WTC11 (cell line): ENCODE measurements at regions of chr17 and their contacts with region 1.

Region 1: GRCh38 chr17:75271233-75271954 is 363 bp upstream of the MIF4GD start:
- DNase-seq: peak; percentile 78
- ATAC-seq: peak; percentile 31
- H3K4me3 Mint-ChIP-seq: peak overlapping the region; percentile 79
- H3K27ac Mint-ChIP-seq: no peak overlapping the region
- H3K4me1 Mint-ChIP-seq: peaks cover 19% of the 10 kb centered on the region
- H3K27me3 Mint-ChIP-seq: no peaks in the 10 kb centered on the region
- CTCF ChIP-seq: peak; percentile 83

Region 2: DNA sequence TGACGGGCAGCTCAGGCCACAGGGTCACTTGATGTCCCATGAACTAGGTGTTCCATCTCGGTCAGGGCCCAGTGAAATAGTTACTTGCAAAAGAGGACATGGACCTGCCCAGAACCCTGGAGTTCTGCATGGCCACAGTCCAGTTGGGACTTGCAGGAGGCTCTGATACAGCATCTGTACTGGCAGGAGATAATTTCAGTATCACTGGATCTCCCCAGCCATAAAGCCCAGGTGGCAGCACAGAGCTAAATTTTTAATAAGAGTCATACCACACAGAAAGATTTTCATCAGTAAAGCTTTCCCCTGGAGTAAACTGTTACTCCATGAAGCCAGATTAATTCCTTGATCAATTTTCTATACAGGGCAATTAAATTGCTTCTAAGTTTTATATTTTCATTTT is 201.6 kb before region 1 on chr17:
- CTCF ChIA-PET with region 1: no interaction called
- POLR2A ChIA-PET with region 1: no interaction called
- DNase-seq: no peak
- ATAC-seq: no peak
- H3K4me3 Mint-ChIP-seq: no peak overlapping the region
- H3K27ac Mint-ChIP-seq: 0 out of 2 replicates have a peak overlapping the region, but pooled peaks have one; percentile 49
- H3K4me1 Mint-ChIP-seq: no peaks in the 10 kb centered on the region
- H3K27me3 Mint-ChIP-seq: no peaks in the 10 kb centered on the region
- CTCF ChIP-seq: no peak

Region 3: DNA sequence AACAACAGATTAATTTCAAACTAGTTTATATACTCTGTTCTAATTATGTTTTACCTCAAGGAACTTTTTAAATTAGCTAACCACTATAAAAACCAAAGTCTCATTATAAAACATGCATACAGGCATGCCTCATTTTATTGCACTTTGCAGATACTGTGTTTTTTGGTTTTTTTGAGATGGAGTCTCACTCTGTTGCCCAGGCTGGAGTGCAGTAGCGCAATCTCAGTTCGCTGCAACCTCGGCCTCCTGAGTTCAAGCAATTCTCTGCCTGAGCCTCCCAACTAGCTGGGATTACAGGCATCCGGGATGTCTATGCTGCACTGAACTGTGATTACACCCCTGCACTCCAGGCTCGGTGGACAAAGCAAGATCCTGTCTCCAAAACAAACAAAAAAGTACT is 108.3 kb before region 1 on chr17:
- CTCF ChIA-PET with region 1: no interaction called
- POLR2A ChIA-PET with region 1: no interaction called
- DNase-seq: no peak
- ATAC-seq: no peak
- H3K4me3 Mint-ChIP-seq: no peak overlapping the region
- H3K27ac Mint-ChIP-seq: no peak overlapping the region
- H3K4me1 Mint-ChIP-seq: 0 out of 2 replicates have a peak, but pooled peaks cover 2% of the 10 kb centered on the region
- H3K27me3 Mint-ChIP-seq: no peaks in the 10 kb centered on the region
- CTCF ChIP-seq: no peak

Region 4: GRCh38 chr17:75289115-75289831 is 17.9 kb after region 1 on chr17 and contains the start of gene SLC25A19:
- CTCF ChIA-PET with region 1: interaction called, 106 read pairs
- POLR2A ChIA-PET with region 1: interaction called, 24 read pairs
- DNase-seq: peak; percentile 98
- ATAC-seq: peak; percentile 98
- H3K4me3 Mint-ChIP-seq: peak within 1 kb of the TSS; percentile 94
- H3K27ac Mint-ChIP-seq: peak within 1 kb of the TSS; percentile 99
- H3K4me1 Mint-ChIP-seq: peaks cover 8% of the 10 kb centered on the region
- H3K27me3 Mint-ChIP-seq: no peaks in the 10 kb centered on the region; the same call in 1 of the 2 replicates
- CTCF ChIP-seq: no peak
- total RNA-seq, gene SLC25A19: 22.6 to 27.7 TPM (median 23.0 TPM) in 3 replicates

Region 5: DNA sequence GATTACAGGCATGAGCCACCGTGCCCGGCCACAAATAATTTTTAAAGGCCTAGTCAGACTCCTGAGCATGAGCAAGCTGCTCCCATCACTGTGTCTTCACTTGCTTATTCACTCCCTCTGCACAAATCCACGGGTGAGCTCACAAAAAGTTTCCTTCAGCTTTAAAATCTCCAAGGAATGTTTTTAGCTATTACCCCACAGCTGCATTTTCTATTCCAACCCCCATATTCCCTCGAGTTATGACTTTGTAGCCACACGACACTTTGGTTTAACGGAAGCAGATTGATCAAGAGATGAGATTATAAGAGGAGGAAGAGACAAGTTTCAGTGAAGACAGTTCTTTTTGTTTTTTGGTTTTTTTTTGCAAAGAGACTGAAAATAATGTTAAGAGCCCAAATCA is 66.9 kb after region 1 on chr17:
- CTCF ChIA-PET with region 1: interaction called, 11 read pairs
- POLR2A ChIA-PET with region 1: no interaction called
- DNase-seq: no peak
- ATAC-seq: no peak
- H3K4me3 Mint-ChIP-seq: no peak overlapping the region
- H3K27ac Mint-ChIP-seq: peak overlapping the region; percentile 92
- H3K4me1 Mint-ChIP-seq: peaks cover 47% of the 10 kb centered on the region
- H3K27me3 Mint-ChIP-seq: no peaks in the 10 kb centered on the region
- CTCF ChIP-seq: no peak

Region 6: DNA sequence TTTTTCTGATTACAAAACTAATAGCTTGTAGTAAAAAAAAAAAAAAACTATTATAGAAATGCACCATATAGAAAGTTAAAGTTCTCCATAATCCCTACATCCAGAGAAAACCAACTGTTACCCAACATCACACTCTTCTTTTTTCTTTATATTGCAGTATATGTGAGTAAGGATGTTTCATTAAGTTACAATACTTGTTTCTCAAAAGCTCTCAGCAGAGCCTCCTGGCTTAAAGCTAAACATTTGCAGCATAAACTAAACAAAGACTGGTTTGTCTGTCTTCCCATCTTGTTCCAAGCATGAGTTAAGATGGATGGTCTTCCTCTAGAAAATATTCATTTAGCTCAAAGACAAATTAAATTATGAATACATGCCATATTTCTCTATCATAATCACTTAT is 108.9 kb after region 1 on chr17:
- CTCF ChIA-PET with region 1: interaction called, 10 read pairs
- POLR2A ChIA-PET with region 1: no interaction called
- DNase-seq: no peak
- ATAC-seq: no peak
- H3K4me3 Mint-ChIP-seq: no peak overlapping the region
- H3K27ac Mint-ChIP-seq: peak overlapping the region; percentile 73
- H3K4me1 Mint-ChIP-seq: peaks cover 21% of the 10 kb centered on the region
- H3K27me3 Mint-ChIP-seq: no peaks in the 10 kb centered on the region
- CTCF ChIP-seq: no peak

Region 7: GRCh38 chr17:75405365-75406221 is 134.2 kb after region 1 on chr17 and contains the start of gene GRB2:
- CTCF ChIA-PET with region 1: interaction called, 32 read pairs
- POLR2A ChIA-PET with region 1: interaction called, 3 read pairs
- DNase-seq: peak; percentile 99
- ATAC-seq: peak; percentile 88
- H3K4me3 Mint-ChIP-seq: peak within 1 kb of the TSS; percentile 87
- H3K27ac Mint-ChIP-seq: no peak within 1 kb of the TSS
- H3K4me1 Mint-ChIP-seq: peaks cover 15% of the 10 kb centered on the region
- H3K27me3 Mint-ChIP-seq: peaks cover 3% of the 10 kb centered on the region; the same call in 1 of the 2 replicates
- CTCF ChIP-seq: no peak
- total RNA-seq, gene GRB2: 82.9 to 93.3 TPM (median 92.6 TPM) in 3 replicates

Region 8: DNA sequence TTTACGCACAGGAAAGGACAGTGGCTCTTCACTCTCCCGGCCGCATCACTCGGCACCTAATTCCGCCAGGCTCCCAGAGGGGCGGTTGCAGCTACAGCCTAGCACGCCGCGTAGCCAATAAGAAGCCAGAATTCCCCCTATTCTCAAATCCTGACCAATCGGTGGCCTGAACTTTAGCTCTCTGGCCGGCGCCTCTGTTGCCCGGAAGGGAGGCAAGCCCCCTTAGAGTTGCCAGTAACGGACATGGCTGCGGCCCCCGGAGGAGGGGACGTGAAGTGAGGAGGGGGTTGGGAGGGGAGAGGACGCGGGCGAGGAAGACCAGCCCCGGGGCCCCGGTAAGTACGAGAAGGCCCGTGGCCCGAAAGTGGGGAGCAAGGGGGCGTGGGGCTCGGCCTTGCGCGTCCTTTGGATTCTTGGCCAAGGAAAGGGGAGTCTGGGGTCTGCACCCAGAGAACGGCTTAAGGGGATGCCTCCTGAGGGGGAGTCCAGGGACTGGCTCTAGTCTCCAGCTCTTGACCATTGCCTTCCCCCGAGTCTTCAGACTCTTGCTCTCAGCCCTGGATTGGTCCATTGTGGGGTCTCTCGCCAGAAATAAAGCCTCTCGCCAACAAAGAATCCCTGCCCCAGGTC is 185.1 kb after region 1 on chr17 and contains the start of gene TMEM94:
- CTCF ChIA-PET with region 1: interaction called, 15 read pairs
- POLR2A ChIA-PET with region 1: no interaction called
- DNase-seq: peak; percentile 95
- ATAC-seq: peak; percentile 91
- H3K4me3 Mint-ChIP-seq: peak within 1 kb of the TSS; percentile 86
- H3K27ac Mint-ChIP-seq: peak within 1 kb of the TSS; percentile 96
- H3K4me1 Mint-ChIP-seq: peaks cover 16% of the 10 kb centered on the region
- H3K27me3 Mint-ChIP-seq: no peaks in the 10 kb centered on the region
- CTCF ChIP-seq: no peak
- total RNA-seq, gene TMEM94: 64.7 to 76.9 TPM (median 68.6 TPM) in 3 replicates